MCF 10A (cell line): ENCODE measurements at regions of chr2 and their contacts with region 1.

Region 1: GRCh38 chr2:163735685-163736432 is at the start of gene FIGN:
- DNase-seq: peak; percentile 79
- H3K4me3 Mint-ChIP-seq: peak within 1 kb of the TSS; percentile 86
- H3K27ac Mint-ChIP-seq: peak within 1 kb of the TSS; percentile 95
- H3K4me1 Mint-ChIP-seq: peaks cover 14% of the 10 kb centered on the region
- H3K27me3 Mint-ChIP-seq: no peaks in the 10 kb centered on the region
- CTCF ChIP-seq: no peak
- total RNA-seq, gene FIGN: 9.0 and 11.7 TPM in 2 replicates

Region 2: DNA sequence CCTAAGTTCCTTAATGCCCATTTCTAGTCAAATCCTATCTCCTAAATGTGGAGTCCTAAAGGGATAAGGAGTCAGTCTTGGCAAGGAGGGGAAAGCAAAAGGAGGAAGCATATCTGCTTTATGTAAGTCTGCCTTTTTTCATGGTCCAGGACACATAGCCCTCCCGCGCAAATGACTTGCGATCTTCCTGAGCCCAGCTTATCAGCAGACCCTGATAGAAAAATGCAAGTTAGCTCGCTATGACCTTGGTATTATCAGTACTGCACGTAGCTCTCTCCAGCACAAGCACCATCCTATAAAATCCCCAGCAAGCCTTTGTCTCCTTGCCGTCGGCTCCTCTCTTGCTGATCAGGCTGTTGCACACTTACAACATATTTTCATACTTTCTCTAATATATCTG is 615.9 kb before region 1 on chr2:
- CTCF ChIA-PET with region 1: no interaction called
- POLR2A ChIA-PET with region 1: no interaction called
- intact Hi-C with region 1: no loop called
- DNase-seq: no peak
- H3K4me3 Mint-ChIP-seq: no peak overlapping the region
- H3K27ac Mint-ChIP-seq: no peak overlapping the region
- H3K4me1 Mint-ChIP-seq: no peaks in the 10 kb centered on the region
- H3K27me3 Mint-ChIP-seq: peaks cover 74% of the 10 kb centered on the region
- CTCF ChIP-seq: no peak

Region 3: GRCh38 chr2:163191372-163191771 is 544.5 kb before region 1 on chr2:
- CTCF ChIA-PET with region 1: no interaction called
- POLR2A ChIA-PET with region 1: no interaction called
- intact Hi-C with region 1: loop called (anchors 5 kb)
- DNase-seq: peak; percentile 64
- H3K4me3 Mint-ChIP-seq: no peak overlapping the region
- H3K27ac Mint-ChIP-seq: no peak overlapping the region
- H3K4me1 Mint-ChIP-seq: peaks cover 8% of the 10 kb centered on the region
- H3K27me3 Mint-ChIP-seq: no peaks in the 10 kb centered on the region
- CTCF ChIP-seq: peak; percentile 78

Region 4: DNA sequence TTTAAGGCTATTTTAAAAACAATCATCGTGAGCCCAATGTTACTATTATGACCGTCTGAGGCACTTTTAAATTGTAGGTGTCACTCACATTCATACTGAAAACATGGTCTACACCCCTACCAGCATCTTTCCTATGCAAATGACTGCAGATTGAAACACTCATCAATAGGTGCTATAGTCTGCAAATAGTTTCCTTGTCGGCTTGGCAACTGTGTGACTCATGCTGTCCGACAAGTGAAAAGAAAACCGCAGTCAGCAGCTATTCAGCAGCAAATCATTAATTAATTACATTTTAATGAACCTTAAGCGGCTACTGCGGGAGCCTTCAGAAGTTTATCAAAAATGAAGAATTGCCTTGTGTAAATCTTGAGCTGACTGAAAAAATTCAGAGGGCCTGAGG is 134.5 kb before region 1 on chr2:
- CTCF ChIA-PET with region 1: interaction called, 3 read pairs
- POLR2A ChIA-PET with region 1: no interaction called
- intact Hi-C with region 1: loop called (anchors 10 kb)
- DNase-seq: peak; percentile 24
- H3K4me3 Mint-ChIP-seq: no peak overlapping the region
- H3K27ac Mint-ChIP-seq: no peak overlapping the region
- H3K4me1 Mint-ChIP-seq: peaks cover 12% of the 10 kb centered on the region
- H3K27me3 Mint-ChIP-seq: no peaks in the 10 kb centered on the region
- CTCF ChIP-seq: no peak

Region 5: GRCh38 chr2:163682692-163683091 is 53.2 kb before region 1 on chr2:
- CTCF ChIA-PET with region 1: interaction called, 4 read pairs
- POLR2A ChIA-PET with region 1: interaction called, 3 read pairs
- intact Hi-C with region 1: loop called (anchors 5 kb)
- DNase-seq: peak; percentile 74
- H3K4me3 Mint-ChIP-seq: peak overlapping the region; percentile 17
- H3K27ac Mint-ChIP-seq: peak overlapping the region; percentile 76
- H3K4me1 Mint-ChIP-seq: peaks cover 20% of the 10 kb centered on the region
- H3K27me3 Mint-ChIP-seq: no peaks in the 10 kb centered on the region
- CTCF ChIP-seq: no peak

Region 6: DNA sequence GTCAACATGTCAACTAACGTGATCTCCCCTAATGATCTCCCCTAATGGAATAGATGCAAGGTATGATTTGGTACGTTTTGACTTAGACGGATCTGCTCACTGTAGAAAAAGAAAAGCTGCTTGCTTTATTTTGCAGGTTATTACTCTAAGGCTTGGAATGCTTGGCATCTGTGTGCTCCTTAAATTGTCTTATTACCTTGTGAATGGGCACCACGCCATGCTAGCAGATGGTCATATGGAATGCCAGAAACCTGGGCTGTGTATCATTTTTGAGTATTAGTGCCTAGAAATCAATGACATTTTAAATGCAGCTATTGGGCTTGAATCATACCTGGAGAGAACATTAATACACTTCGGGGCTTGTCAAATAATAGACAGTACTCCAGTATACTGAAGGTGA is 16.4 kb after region 1 on chr2:
- CTCF ChIA-PET with region 1: interaction called, 3 read pairs
- POLR2A ChIA-PET with region 1: interaction called, 29 read pairs
- intact Hi-C with region 1: no loop called
- DNase-seq: peak; percentile 61
- H3K4me3 Mint-ChIP-seq: peak overlapping the region; percentile 17
- H3K27ac Mint-ChIP-seq: peak overlapping the region; percentile 20
- H3K4me1 Mint-ChIP-seq: peaks cover 31% of the 10 kb centered on the region
- H3K27me3 Mint-ChIP-seq: no peaks in the 10 kb centered on the region
- CTCF ChIP-seq: no peak

Region 7: DNA sequence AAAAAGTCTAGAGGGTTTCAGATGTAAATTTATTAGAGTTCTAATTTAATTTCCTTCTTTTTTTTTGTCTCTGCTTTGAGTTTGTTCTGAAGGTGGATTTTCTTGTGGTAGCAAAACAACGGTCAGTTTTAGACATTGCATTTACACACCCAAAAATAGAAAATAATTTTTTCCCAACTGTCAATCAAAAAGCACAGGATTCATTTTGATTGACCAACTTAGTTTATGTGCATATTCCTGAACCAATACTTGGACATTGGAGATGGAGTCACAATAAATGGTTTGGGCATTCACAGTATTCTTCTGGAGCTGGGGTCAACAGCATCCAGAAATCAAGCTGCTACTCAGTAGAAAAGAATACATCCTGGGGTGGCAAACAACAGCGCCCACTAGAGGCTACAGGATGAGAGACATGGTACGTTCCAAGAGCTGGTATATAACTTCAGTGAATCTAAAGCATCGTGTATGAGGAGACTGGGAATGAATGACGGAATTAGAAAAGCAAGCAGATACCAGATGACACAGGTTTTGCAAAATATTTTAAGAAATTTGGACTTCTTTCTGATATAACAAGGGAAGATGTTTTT is 142.8 kb after region 1 on chr2:
- CTCF ChIA-PET with region 1: no interaction called
- POLR2A ChIA-PET with region 1: no interaction called
- intact Hi-C with region 1: loop called (anchors 5 kb)
- DNase-seq: peak; percentile 66
- H3K4me3 Mint-ChIP-seq: no peak overlapping the region
- H3K27ac Mint-ChIP-seq: no peak overlapping the region
- H3K4me1 Mint-ChIP-seq: no peaks in the 10 kb centered on the region
- H3K27me3 Mint-ChIP-seq: no peaks in the 10 kb centered on the region
- CTCF ChIP-seq: peak; percentile 50